ENCODE measurements at regions of chr15 and their contacts with region 1.

Region 1: GRCh38 chr15:43939070-43939469 is 112.3 kb downstream of the WDR76 start:
- DNase-seq: peak in 1 of 2 experiments; percentile 55
- H3K4me3 ChIP-seq: no peak overlapping the region
- H3K27ac ChIP-seq: no peak overlapping the region
- H3K4me1 ChIP-seq: no peaks in the 10 kb centered on the region
- H3K27me3 ChIP-seq: no peaks in the 10 kb centered on the region; a peak in 1 of 7 replicates
- CTCF ChIP-seq: peak in 2 of 3 experiments; percentile 48 to 55; a peak in 3 of 4 replicates
- EP300 ChIP-seq: no peak
- POLR2A ChIP-seq: no peak
- RAD21 ChIP-seq: peak; percentile 44 to 59

Region 2: DNA sequence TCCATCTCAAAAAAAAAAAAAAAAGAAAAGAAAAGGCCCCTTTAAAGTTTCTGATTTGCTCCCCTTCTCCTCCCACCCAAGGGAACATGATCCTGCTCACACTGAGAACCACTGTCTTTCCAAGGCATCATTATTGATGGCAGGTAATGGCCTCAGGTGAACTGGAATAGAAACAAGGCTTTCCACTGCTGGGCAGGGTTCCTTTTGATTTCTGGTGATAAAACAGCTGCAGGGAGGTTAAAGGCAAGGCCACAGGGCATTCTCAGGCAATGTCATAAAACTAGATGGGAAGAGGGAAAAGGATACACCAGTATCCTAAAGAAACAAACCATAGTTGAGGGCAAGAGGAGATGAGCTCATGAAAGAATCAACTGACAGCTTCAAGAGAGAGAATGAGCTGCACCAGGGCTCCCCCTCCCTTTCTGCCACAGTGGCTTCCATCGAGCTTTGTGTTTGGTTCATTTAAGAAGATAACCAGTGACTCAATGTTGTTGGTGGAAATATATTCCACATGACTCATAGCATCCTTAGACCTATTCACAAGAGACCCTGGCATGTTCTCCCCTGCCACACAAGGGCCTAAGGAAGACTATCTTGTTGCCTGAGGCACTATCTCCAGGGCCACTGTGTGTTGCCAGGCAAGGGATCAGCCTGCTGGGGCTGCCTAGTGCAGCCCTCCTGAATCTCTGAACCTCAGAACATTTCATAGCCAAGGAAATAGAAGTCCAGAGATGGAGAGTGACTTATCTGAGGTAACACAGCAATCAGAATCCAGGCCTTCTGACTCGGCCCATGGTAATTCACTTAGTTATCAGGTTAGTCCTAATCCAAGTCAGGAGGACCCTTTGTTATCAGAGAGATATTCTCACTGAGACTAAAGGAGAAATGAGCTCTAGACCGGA is 25.8 kb before region 1 on chr15:
- CTCF ChIA-PET with region 1: interaction called, 11 read pairs
- POLR2A ChIA-PET with region 1: no interaction called
- DNase-seq: peak in 1 of 2 experiments; percentile 21
- H3K4me3 ChIP-seq: no peak overlapping the region
- H3K27ac ChIP-seq: no peak overlapping the region
- H3K4me1 ChIP-seq: peaks cover 0 to 3% (median 1%) of the 10 kb centered on the region in 4 experiments; a peak in 1 of 7 replicates
- H3K27me3 ChIP-seq: no peaks in the 10 kb centered on the region
- CTCF ChIP-seq: no peak
- EP300 ChIP-seq: no peak
- POLR2A ChIP-seq: no peak
- RAD21 ChIP-seq: no peak

Region 3: DNA sequence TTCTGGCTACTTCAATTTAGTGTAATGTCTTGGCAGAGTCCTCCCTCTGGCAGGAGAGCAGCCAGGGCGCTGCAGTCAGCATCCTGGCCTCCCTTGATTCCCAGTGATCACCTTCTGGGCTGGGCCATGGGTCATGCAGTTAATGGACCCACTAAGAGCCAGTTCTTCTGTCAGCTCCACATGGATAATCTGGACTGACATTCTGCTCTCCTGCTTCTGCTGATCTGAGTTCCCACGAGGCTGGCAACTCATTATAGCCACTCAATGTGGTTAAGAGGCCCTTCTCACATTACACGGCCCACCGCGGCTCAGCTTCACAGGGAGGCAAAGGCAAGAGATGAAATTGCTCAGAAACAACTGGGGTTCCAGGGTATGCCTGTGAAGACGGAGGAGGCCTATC is 18.3 kb before region 1 on chr15:
- CTCF ChIA-PET with region 1: interaction called, 13 read pairs
- POLR2A ChIA-PET with region 1: interaction called, 4 read pairs
- DNase-seq: no peak
- H3K4me3 ChIP-seq: no peak overlapping the region
- H3K27ac ChIP-seq: no peak overlapping the region
- H3K4me1 ChIP-seq: peaks cover 5 to 11% (median 7%) of the 10 kb centered on the region in 4 experiments
- H3K27me3 ChIP-seq: no peaks in the 10 kb centered on the region
- CTCF ChIP-seq: no peak
- EP300 ChIP-seq: no peak
- POLR2A ChIP-seq: no peak
- RAD21 ChIP-seq: no peak

Region 4: DNA sequence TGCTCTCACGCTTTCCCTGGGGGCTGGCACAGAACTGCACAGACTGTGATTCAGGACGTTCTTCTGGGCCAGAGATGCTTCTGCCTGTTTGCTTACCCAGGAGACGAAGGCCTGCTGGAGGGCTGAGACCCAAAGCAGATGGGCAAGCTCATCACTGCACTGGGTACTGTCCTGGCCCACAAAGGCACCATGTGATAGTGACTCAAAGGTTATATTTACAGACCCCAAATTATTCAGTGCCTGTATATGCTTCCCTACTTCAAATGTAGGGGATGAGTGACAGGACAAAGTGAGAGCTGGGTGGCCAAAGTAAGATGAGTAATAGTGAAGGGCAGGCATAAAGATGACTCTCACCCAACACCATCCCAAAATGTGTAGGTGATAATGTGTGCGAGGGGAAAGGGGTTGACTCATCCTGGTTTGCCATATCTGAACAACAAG is 15.1 kb after region 1 on chr15:
- CTCF ChIA-PET with region 1: interaction called, 14 read pairs
- POLR2A ChIA-PET with region 1: interaction called, 3 read pairs
- DNase-seq: no peak
- H3K4me3 ChIP-seq: no peak overlapping the region
- H3K27ac ChIP-seq: no peak overlapping the region
- H3K4me1 ChIP-seq: peaks cover 3 to 6% (median 4%) of the 10 kb centered on the region in 4 experiments; a peak in 4 of 7 replicates
- H3K27me3 ChIP-seq: no peaks in the 10 kb centered on the region
- CTCF ChIP-seq: no peak
- EP300 ChIP-seq: no peak
- POLR2A ChIP-seq: no peak
- RAD21 ChIP-seq: no peak

Measured in H1 (cell line).